WTC11 (cell line): ENCODE measurements at regions of chr6 and their contacts with region 1.

Region 1: DNA sequence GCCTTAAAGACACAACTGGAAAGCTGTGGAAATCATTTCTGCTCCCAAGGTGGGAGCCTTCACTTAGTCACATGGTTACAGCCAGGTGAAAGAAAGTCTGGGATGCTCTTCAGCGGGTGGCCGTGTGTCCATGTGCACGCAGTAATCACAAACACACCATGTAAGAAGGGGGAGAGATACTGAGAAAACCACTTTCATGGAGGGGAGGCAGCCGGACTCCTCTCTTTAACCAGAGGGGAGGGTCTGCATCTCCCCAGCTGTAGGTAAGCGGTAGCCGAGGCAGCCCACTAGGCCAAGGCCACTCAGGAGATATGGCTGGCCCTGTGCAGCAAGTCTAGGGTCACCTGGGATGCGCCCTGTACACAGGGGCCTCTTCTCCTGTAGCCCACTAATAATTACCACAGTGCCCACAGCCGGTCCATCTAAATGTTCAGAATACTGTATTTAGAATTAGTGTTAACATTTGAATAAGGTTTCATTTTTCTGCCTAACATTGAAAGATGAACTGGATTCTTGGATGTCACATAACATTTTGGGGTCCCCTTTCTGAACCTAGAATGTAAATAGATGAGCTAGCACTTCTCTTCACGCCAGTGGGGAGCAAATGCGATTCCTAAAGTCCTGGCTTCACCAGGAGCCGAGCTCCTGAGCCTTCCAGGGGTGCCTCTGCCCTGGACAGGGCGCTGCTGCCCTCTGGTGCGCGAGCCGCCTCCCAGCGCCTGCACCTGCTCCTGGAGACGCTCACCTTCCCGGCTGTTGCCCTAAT is 15.9 kb downstream of the GPR31 start:
- DNase-seq: peak; percentile 78
- ATAC-seq: peak; percentile 77
- H3K4me3 Mint-ChIP-seq: no peak overlapping the region
- H3K27ac Mint-ChIP-seq: no peak overlapping the region
- H3K4me1 Mint-ChIP-seq: peaks cover 54% of the 10 kb centered on the region
- H3K27me3 Mint-ChIP-seq: peaks cover 28% of the 10 kb centered on the region
- CTCF ChIP-seq: peak; percentile 46

Region 2: GRCh38 chr6:166999145-166999883 is 142.5 kb before region 1 on chr6 and contains the start of gene CEP43:
- CTCF ChIA-PET with region 1: interaction called, 17 read pairs
- POLR2A ChIA-PET with region 1: interaction called, 3 read pairs
- DNase-seq: peak; percentile 92
- ATAC-seq: peak; percentile 96
- H3K4me3 Mint-ChIP-seq: peak within 1 kb of the TSS; percentile 89
- H3K27ac Mint-ChIP-seq: peak within 1 kb of the TSS; percentile 65; the same call in 1 of the 2 replicates
- H3K4me1 Mint-ChIP-seq: peaks cover 27% of the 10 kb centered on the region
- H3K27me3 Mint-ChIP-seq: no peaks in the 10 kb centered on the region
- CTCF ChIP-seq: no peak
- total RNA-seq, gene CEP43: 23.4 to 25.6 TPM (median 25.1 TPM) in 3 replicates

Region 3: DNA sequence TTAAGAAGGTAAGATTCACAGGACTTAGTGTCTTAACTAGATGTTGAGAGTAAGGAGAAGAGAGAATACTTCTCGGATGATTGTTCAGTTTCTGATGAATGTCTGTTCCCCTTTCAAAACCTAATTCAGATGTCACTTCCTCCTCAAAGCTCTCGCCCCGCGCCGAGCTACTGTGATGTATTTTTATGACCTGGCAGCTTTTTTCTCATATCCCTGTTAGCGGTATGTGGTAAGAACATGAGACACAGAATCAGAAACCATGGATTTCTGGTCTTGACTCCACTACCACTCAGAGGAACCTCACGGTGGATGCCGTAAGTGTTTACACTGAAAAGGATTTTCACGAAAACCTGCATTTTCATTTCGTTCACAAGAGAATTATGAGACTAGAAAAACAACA is 94.3 kb before region 1 on chr6:
- CTCF ChIA-PET with region 1: interaction called, 23 read pairs
- POLR2A ChIA-PET with region 1: no interaction called
- DNase-seq: no peak
- ATAC-seq: no peak
- H3K4me3 Mint-ChIP-seq: no peak overlapping the region
- H3K27ac Mint-ChIP-seq: no peak overlapping the region
- H3K4me1 Mint-ChIP-seq: peaks cover 3% of the 10 kb centered on the region
- H3K27me3 Mint-ChIP-seq: no peaks in the 10 kb centered on the region
- CTCF ChIP-seq: no peak

Region 4: GRCh38 chr6:167073679-167074274 is 68.1 kb before region 1 on chr6:
- CTCF ChIA-PET with region 1: no interaction called
- POLR2A ChIA-PET with region 1: no interaction called
- DNase-seq: no peak
- ATAC-seq: no peak
- H3K4me3 Mint-ChIP-seq: no peak overlapping the region
- H3K27ac Mint-ChIP-seq: no peak overlapping the region
- H3K4me1 Mint-ChIP-seq: no peaks in the 10 kb centered on the region
- H3K27me3 Mint-ChIP-seq: no peaks in the 10 kb centered on the region; the same call in 1 of the 2 replicates
- CTCF ChIP-seq: no peak

Region 5: GRCh38 chr6:167093922-167094432 is 47.9 kb before region 1 on chr6:
- CTCF ChIA-PET with region 1: interaction called, 10 read pairs
- POLR2A ChIA-PET with region 1: interaction called, 4 read pairs
- DNase-seq: no peak
- ATAC-seq: peak; percentile 53
- H3K4me3 Mint-ChIP-seq: no peak overlapping the region
- H3K27ac Mint-ChIP-seq: 0 out of 2 replicates have a peak overlapping the region, but pooled peaks have one; percentile 46
- H3K4me1 Mint-ChIP-seq: peaks cover 8% of the 10 kb centered on the region
- H3K27me3 Mint-ChIP-seq: no peaks in the 10 kb centered on the region; the same call in 1 of the 2 replicates
- CTCF ChIP-seq: no peak

Region 6: GRCh38 chr6:167130008-167130677 is 11.7 kb before region 1 on chr6:
- CTCF ChIA-PET with region 1: interaction called, 10 read pairs
- POLR2A ChIA-PET with region 1: no interaction called
- DNase-seq: no peak
- ATAC-seq: no peak
- H3K4me3 Mint-ChIP-seq: no peak overlapping the region
- H3K27ac Mint-ChIP-seq: no peak overlapping the region
- H3K4me1 Mint-ChIP-seq: no peaks in the 10 kb centered on the region
- H3K27me3 Mint-ChIP-seq: no peaks in the 10 kb centered on the region
- CTCF ChIP-seq: no peak

Region 7: DNA sequence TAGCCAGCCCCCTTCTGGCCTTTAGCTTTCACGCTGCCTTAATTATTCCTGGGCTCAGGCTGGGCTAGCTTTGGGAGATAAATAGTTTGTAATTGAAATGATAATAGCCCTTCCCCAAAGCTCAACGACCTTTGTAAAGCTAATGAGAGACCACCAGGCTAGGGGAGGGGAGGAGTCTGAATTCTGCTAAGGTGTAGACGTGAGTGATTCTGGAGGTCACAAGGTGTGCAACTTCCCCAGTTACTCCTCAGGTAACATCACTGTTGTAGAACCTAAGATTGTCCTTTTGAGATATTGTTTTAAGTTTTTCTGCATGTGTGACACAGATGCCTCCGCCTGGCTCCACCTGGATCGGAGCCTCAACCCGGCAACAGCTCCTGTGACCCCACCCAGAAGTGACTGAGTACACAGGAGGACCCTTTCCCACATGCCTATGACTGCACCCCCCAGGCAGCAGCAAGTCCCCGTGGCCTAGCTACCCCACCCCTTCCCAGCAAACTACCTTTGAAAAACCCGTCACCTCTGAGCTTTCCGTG is 21.7 kb after region 1 on chr6:
- CTCF ChIA-PET with region 1: interaction called, 28 read pairs
- POLR2A ChIA-PET with region 1: no interaction called
- DNase-seq: peak; percentile 63
- ATAC-seq: peak; percentile 92
- H3K4me3 Mint-ChIP-seq: peak overlapping the region; percentile 47
- H3K27ac Mint-ChIP-seq: peak overlapping the region; percentile 98
- H3K4me1 Mint-ChIP-seq: peaks cover 54% of the 10 kb centered on the region
- H3K27me3 Mint-ChIP-seq: no peaks in the 10 kb centered on the region
- CTCF ChIP-seq: no peak

Region 8: GRCh38 chr6:167285077-167285770 is 143.4 kb after region 1 on chr6:
- CTCF ChIA-PET with region 1: no interaction called
- POLR2A ChIA-PET with region 1: no interaction called
- DNase-seq: no peak
- ATAC-seq: no peak
- H3K4me3 Mint-ChIP-seq: no peak overlapping the region
- H3K27ac Mint-ChIP-seq: no peak overlapping the region
- H3K4me1 Mint-ChIP-seq: peaks cover 55% of the 10 kb centered on the region
- H3K27me3 Mint-ChIP-seq: peaks cover 8% of the 10 kb centered on the region
- CTCF ChIP-seq: no peak